ENCODE measurements at regions of chrX and their contacts with region 1.

Region 1: GRCh38 chrX:16670998-16671397 is 21.0 kb downstream of the S100G start:
- DNase-seq: peak; percentile 12
- ATAC-seq: 0 out of 2 replicates have a peak, but pooled peaks have one; percentile 38
- H3K4me3 ChIP-seq: no peak overlapping the region
- H3K27ac ChIP-seq: no peak overlapping the region
- H3K4me1 ChIP-seq: no peaks in the 10 kb centered on the region
- H3K27me3 ChIP-seq: no peaks in the 10 kb centered on the region
- CTCF ChIP-seq: peak in 2 of 3 experiments; percentile 18 to 22; a peak in 2 of 6 replicates
- POLR2A ChIP-seq: no peak
- RAD21 ChIP-seq: peak; percentile 64

Region 2: GRCh38 chrX:16436348-16437188 is 234.4 kb before region 1 on chrX:
- CTCF ChIA-PET with region 1: interaction called, 3 read pairs
- POLR2A ChIA-PET with region 1: no interaction called
- RAD21 ChIA-PET with region 1: no interaction called
- intact Hi-C with region 1: loop called (anchors 5 kb)
- DNase-seq: peak; percentile 65
- ATAC-seq: peak; percentile 99
- H3K4me3 ChIP-seq: no peak overlapping the region
- H3K27ac ChIP-seq: no peak overlapping the region
- H3K4me1 ChIP-seq: peaks cover 0 to 4% of the 10 kb centered on the region in 2 experiments; a peak in 2 of 4 replicates
- H3K27me3 ChIP-seq: no peaks in the 10 kb centered on the region
- CTCF ChIP-seq: peak; percentile 40 to 63 (median 56); a peak in 5 of 6 replicates
- POLR2A ChIP-seq: no peak
- RAD21 ChIP-seq: peak; percentile 51

Measured in HCT116 (cell line).